ENCODE measurements at regions of chr12 and their contacts with region 1.

Region 1: DNA sequence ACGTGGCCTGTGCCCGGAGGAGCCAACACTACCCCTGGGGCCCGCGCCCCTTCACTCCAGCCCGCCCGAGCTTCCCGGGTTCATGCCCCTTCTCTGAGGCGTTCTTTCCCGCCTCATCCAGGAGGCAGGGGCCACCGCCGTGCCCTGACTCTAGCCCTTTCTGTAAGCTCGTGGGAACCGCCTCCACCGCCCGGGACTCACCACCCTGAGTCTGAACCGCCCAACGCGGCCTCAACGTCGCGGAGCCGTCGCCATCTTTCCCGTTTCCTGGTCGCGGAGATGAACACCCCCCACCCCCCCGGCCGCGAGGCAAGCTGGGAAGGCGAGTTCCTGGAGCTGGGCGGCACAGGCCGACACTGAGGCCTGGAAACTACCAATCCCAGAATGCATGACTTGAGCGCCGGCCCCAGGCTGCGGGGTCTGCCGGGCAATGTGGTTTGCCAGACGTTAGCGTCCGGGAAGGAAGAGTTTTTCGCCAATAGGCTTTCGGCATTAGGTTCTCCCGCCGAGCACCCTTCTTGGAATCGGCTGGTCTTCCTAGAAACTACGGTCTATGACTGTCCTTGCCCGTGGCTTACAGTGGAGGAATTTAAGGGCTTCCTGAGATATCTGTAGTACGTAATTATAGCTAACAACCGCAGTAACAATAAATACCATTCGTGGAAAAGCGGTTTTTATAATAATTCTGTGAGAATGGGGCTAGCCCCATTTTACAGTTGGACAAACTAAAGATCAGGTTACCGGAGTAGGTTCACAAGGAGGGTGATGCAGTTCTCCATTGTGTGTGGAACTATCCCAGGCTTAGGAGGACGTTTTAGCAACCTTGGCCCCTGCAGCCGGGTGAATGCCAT is at the start of gene DDX23:
- DNase-seq: peak; percentile 99
- H3K4me3 ChIP-seq: peak within 1 kb of the TSS; percentile 79
- H3K27ac ChIP-seq: peak within 1 kb of the TSS; percentile 84
- H3K4me1 ChIP-seq: peaks cover 19% of the 10 kb centered on the region
- H3K27me3 ChIP-seq: no peaks in the 10 kb centered on the region
- CTCF ChIP-seq: no peak
- total RNA-seq, gene DDX23: 111 and 135 TPM in 2 replicates

Region 2: GRCh38 chr12:48788854-48789796 is 63.0 kb before region 1 on chr12 and contains the start of gene ADCY6:
- CTCF ChIA-PET with region 1: interaction called, 10 read pairs
- POLR2A ChIA-PET with region 1: no interaction called
- intact Hi-C with region 1: no loop called
- DNase-seq: peak; percentile 35
- H3K4me3 ChIP-seq: peak within 1 kb of the TSS; percentile 89
- H3K27ac ChIP-seq: peak within 1 kb of the TSS; percentile 72
- H3K4me1 ChIP-seq: peaks cover 12% of the 10 kb centered on the region
- H3K27me3 ChIP-seq: no peaks in the 10 kb centered on the region
- CTCF ChIP-seq: no peak
- total RNA-seq, gene ADCY6: 6.8 and 12.8 TPM in 2 replicates

Region 3: DNA sequence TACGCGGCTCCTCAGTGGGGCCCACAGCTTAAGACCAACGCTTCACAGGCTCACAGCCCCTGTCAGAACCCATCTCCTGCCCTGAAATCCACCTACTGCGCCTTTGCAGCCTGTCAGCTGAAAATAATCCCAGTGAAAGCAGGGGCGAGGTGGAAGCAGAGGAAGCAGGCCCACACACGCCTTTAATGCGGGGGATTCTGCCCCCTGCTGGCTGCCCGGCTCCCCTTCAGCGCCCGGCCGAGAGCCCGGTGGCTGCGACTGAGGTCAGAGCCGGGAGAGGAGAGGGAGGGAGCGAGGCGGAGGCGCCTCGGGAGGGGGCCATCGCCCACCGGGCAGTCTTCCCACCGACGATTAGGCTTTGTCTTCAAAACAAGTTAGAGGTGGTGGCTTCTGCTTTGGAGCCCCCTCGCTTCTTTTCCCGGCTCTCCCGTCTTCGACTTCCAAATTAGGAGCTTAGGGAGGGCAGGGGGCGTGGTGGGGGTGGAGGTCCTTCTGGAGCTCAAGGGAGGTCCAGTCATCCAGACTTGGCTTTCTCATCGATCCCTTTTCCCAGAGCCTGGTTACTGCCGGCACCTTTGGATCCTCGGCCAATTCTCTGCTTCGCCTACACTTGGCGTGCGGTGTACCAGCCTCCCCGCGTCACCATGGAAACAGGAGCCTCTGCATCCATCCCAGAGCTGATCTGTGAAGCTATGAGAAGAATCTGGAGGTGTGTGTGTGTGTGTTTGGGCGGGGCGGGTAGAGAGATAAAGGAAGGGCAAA is 38.7 kb after region 1 on chr12:
- CTCF ChIA-PET with region 1: interaction called, 56 read pairs
- POLR2A ChIA-PET with region 1: no interaction called
- intact Hi-C with region 1: loop called (anchors 1 kb)
- DNase-seq: peak; percentile 80
- H3K4me3 ChIP-seq: peak overlapping the region; percentile 27
- H3K27ac ChIP-seq: no peak overlapping the region
- H3K4me1 ChIP-seq: no peaks in the 10 kb centered on the region
- H3K27me3 ChIP-seq: peaks cover 13% of the 10 kb centered on the region
- CTCF ChIP-seq: peak; percentile 95

Region 4: DNA sequence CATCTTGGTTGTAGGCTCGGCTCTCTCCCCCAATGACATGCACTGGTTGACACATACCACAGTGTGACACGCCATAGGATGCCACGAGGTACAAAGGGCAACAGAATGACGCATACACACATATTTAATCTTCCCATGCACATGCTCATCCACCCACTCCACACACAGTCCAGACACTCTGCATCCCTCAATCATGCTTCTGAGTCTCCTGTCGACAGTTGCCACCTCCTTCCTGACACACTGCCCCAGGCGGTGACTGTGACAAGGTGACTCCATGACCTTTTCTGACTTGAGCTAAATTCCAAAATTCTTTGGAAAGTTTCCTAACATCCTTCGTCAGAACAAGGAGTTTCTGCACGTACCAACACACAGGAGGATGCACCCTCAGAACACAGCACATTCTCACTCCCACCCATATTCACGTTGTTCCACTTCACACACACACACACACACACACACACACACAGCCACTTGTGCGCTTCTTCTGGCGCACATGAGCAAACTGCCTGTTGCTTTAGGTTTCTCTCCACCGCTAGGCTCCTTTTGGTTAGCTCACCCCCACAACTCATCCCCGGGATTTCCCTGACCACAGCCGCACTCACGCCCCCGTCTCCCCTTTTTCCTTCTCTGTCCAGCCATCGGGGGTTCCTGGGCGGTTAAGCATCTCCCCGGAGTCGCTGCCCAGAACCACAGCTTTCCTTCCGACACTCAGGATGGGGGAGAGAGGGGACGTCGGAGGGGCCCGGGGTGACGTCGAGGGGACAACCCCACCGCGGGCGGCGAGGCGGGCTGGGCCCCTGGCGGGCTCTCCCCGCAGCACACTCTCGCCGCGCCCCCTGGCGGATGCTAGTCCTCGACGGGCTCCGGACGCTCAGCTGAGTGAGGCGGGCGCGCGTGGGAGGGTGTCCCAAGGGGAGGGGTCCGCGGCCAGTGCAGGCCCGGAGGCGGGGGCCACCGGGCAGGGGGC is 125.5 kb after region 1 on chr12:
- CTCF ChIA-PET with region 1: interaction called, 9 read pairs
- POLR2A ChIA-PET with region 1: no interaction called
- intact Hi-C with region 1: loop called (anchors 5 kb)
- DNase-seq: peak; percentile 71
- H3K4me3 ChIP-seq: peak overlapping the region; percentile 32
- H3K27ac ChIP-seq: no peak overlapping the region
- H3K4me1 ChIP-seq: peaks cover 32% of the 10 kb centered on the region
- H3K27me3 ChIP-seq: peaks cover 69% of the 10 kb centered on the region
- CTCF ChIP-seq: peak; percentile 81

Region 5: GRCh38 chr12:49108958-49109404 is 256.9 kb after region 1 on chr12:
- CTCF ChIA-PET with region 1: no interaction called
- POLR2A ChIA-PET with region 1: no interaction called
- intact Hi-C with region 1: no loop called
- DNase-seq: no peak
- H3K4me3 ChIP-seq: peak overlapping the region; percentile 95
- H3K27ac ChIP-seq: peak overlapping the region; percentile 27
- H3K4me1 ChIP-seq: peaks cover 8% of the 10 kb centered on the region
- H3K27me3 ChIP-seq: no peaks in the 10 kb centered on the region
- CTCF ChIP-seq: no peak

Region 6: DNA sequence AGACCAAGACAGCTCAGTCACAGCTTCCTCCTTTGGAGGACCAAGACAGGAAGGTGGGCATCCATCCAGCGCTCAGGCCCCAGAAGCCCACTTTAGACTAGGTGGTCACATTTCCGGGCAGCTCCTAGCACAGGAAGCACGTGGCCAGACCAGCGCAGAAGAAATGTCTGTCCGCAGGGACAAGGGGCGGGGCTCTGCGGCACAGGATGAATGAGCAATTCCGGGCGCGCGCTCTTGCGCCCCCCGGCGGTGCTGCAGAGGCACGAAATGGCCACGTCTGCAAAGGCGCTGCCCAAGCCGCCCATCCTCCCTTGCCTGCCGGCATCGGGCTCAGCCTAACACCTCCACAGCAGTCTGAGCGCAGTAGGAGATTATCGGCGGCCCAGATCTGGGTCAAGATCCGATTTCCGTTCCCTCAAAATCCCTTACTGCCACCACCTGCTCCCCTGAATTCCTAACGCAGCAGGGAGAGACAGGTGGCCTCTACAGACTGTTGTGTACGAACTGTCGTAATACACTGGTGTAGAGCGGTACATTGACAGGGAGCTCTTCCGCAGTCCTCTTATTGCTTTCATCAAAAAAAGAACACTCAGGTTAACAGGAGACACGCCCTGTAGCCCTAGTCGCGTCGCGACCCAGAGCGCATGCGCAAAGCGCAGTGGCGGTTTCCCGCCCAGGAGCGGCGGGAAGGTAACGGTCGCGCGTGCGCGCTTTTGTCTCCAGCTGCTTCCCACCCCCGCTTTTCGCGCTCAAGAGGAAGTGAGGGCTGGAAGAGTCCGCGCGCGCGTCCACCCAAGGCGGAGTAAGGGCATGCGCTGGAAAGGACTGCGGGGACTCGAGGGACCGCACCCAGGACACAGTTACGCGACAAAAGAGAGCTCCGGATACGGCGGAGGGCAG is 278.3 kb after region 1 on chr12:
- CTCF ChIA-PET with region 1: no interaction called
- POLR2A ChIA-PET with region 1: interaction called, 10 read pairs
- intact Hi-C with region 1: no loop called
- DNase-seq: peak; percentile 94
- H3K4me3 ChIP-seq: peak overlapping the region; percentile 99
- H3K27ac ChIP-seq: peak overlapping the region; percentile 100
- H3K4me1 ChIP-seq: peaks cover 25% of the 10 kb centered on the region
- H3K27me3 ChIP-seq: no peaks in the 10 kb centered on the region
- CTCF ChIP-seq: peak; percentile 97

Measured in A673 (cell line).